Activated B cell treated with CpG ODN at 0.5 μM for 24 hours (primary cell): ENCODE measurements at regions of chr22 and their contacts with region 1.

Region 1: GRCh38 chr22:18024276-18024947 is at the start of gene MICAL3:
- DNase-seq: peak; percentile 83
- ATAC-seq: peak; percentile 96
- H3K4me3 Mint-ChIP-seq: peak within 1 kb of the TSS; percentile 94
- H3K27ac Mint-ChIP-seq: peak within 1 kb of the TSS; percentile 91
- H3K4me1 Mint-ChIP-seq: peaks cover 18% of the 10 kb centered on the region
- H3K27me3 Mint-ChIP-seq: no peaks in the 10 kb centered on the region
- CTCF ChIP-seq: no peak
- total RNA-seq, gene MICAL3: 232 and 257 TPM in 2 replicates

Region 2: GRCh38 chr22:17552737-17553136 is 471.7 kb before region 1 on chr22:
- CTCF ChIA-PET with region 1: no interaction called
- POLR2A ChIA-PET with region 1: no interaction called
- intact Hi-C with region 1: no loop called
- DNase-seq: no peak
- ATAC-seq: no peak
- H3K4me3 Mint-ChIP-seq: no peak overlapping the region
- H3K27ac Mint-ChIP-seq: no peak overlapping the region
- H3K4me1 Mint-ChIP-seq: no peaks in the 10 kb centered on the region
- H3K27me3 Mint-ChIP-seq: no peaks in the 10 kb centered on the region
- CTCF ChIP-seq: no peak

Region 3: GRCh38 chr22:17742527-17742902 is 281.9 kb before region 1 on chr22:
- CTCF ChIA-PET with region 1: interaction called, 5 read pairs
- POLR2A ChIA-PET with region 1: no interaction called
- intact Hi-C with region 1: loop called (anchors 1 kb)
- DNase-seq: peak; percentile 59
- ATAC-seq: peak; percentile 95
- H3K4me3 Mint-ChIP-seq: no peak overlapping the region
- H3K27ac Mint-ChIP-seq: no peak overlapping the region
- H3K4me1 Mint-ChIP-seq: peaks cover 9% of the 10 kb centered on the region
- H3K27me3 Mint-ChIP-seq: no peaks in the 10 kb centered on the region
- CTCF ChIP-seq: no peak

Region 4: GRCh38 chr22:17888855-17889254 is 135.6 kb before region 1 on chr22:
- CTCF ChIA-PET with region 1: interaction called, 4 read pairs
- POLR2A ChIA-PET with region 1: no interaction called
- intact Hi-C with region 1: loop called (anchors 5 kb)
- DNase-seq: no peak
- ATAC-seq: no peak
- H3K4me3 Mint-ChIP-seq: no peak overlapping the region
- H3K27ac Mint-ChIP-seq: no peak overlapping the region
- H3K4me1 Mint-ChIP-seq: no peaks in the 10 kb centered on the region
- H3K27me3 Mint-ChIP-seq: no peaks in the 10 kb centered on the region
- CTCF ChIP-seq: no peak

Region 5: DNA sequence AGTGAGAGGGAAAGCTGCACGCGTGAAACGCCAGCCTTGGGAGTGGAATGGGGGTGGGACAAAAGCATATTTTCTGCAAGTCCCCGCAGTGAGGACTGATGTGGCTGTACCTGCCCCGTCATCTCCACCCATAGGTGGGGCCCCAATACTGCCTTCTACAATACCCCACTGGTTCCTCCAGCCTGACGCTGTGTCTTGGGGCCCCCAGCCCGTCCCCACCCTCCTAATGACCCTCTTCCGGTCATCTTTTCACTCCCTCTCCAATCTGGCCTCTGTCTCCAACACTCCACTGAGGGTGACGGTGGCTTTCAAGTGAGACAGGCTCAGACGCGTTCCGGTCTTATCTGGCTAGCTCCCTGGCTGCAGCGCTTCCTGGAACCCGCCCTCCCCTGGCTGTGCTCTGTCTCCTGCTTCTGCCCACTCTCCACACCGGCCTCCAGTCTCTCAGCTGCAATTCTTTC is 104.2 kb before region 1 on chr22:
- CTCF ChIA-PET with region 1: interaction called, 5 read pairs
- POLR2A ChIA-PET with region 1: no interaction called
- intact Hi-C with region 1: loop called (anchors 2 kb)
- DNase-seq: no peak
- ATAC-seq: peak; percentile 50
- H3K4me3 Mint-ChIP-seq: peak overlapping the region; percentile 29
- H3K27ac Mint-ChIP-seq: peak overlapping the region; percentile 33
- H3K4me1 Mint-ChIP-seq: no peaks in the 10 kb centered on the region
- H3K27me3 Mint-ChIP-seq: no peaks in the 10 kb centered on the region
- CTCF ChIP-seq: no peak

Region 6: DNA sequence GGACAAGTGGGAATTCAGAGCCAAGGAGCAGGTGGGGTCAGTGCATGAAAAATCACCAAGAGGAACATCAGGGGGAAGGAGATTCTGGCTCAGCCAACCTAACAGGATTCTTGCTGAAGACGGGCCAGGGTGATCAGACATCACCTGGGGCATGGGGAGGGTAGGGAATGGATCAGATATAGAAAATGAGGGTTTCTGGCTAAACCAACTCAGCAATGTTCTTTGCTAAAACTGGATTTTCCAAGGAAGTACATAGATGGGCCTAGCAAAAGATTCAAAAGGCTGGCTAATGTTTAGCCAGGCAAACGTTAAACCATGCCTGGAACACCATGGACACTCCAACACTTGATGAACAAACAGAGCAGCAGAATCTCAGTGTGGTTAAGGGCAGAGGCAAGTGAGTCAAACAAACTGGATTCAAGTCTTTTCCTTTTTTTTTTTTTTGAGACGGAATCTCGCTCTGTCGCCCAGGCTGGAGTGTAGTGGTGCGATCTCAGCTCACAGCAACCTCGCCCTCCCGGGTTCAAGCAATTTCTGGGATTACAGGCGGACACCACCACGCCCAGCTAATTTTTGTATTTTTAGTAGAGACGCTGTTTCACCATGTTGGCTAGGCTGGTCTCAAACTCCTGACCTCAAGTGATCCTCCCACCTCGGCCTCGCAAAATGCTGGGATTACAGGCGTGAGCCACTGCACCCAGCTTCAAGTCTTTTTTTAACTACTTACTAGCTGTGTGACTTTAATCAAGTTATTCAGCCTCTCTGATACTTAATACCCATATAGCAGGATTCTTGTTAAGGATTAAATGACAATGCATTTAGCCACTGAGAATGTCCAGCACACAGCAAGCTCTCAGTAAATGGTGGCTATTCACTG is 69.9 kb before region 1 on chr22:
- CTCF ChIA-PET with region 1: no interaction called
- POLR2A ChIA-PET with region 1: no interaction called
- intact Hi-C with region 1: no loop called
- DNase-seq: no peak
- ATAC-seq: no peak
- H3K4me3 Mint-ChIP-seq: no peak overlapping the region
- H3K27ac Mint-ChIP-seq: peak overlapping the region; percentile 12
- H3K4me1 Mint-ChIP-seq: peaks cover 82% of the 10 kb centered on the region
- H3K27me3 Mint-ChIP-seq: no peaks in the 10 kb centered on the region
- CTCF ChIP-seq: no peak

Region 7: GRCh38 chr22:17980638-17981051 is 43.8 kb before region 1 on chr22:
- CTCF ChIA-PET with region 1: interaction called, 3 read pairs
- POLR2A ChIA-PET with region 1: no interaction called
- intact Hi-C with region 1: loop called (anchors 5 kb)
- DNase-seq: no peak
- ATAC-seq: peak; percentile 72
- H3K4me3 Mint-ChIP-seq: peak overlapping the region; percentile 68
- H3K27ac Mint-ChIP-seq: peak overlapping the region; percentile 76
- H3K4me1 Mint-ChIP-seq: peaks cover 84% of the 10 kb centered on the region
- H3K27me3 Mint-ChIP-seq: no peaks in the 10 kb centered on the region
- CTCF ChIP-seq: no peak

Region 8: GRCh38 chr22:18057568-18058209 is 33.3 kb after region 1 on chr22:
- CTCF ChIA-PET with region 1: interaction called, 20 read pairs
- POLR2A ChIA-PET with region 1: interaction called, 9 read pairs
- intact Hi-C with region 1: loop called (anchors 1 kb)
- DNase-seq: peak; percentile 53
- ATAC-seq: peak; percentile 83
- H3K4me3 Mint-ChIP-seq: peak overlapping the region; percentile 71
- H3K27ac Mint-ChIP-seq: peak overlapping the region; percentile 97
- H3K4me1 Mint-ChIP-seq: peaks cover 49% of the 10 kb centered on the region
- H3K27me3 Mint-ChIP-seq: no peaks in the 10 kb centered on the region
- CTCF ChIP-seq: no peak